CD4-positive, alpha-beta T cell (primary cell): ENCODE measurements at regions of chr1 and their contacts with region 1.

Region 1: DNA sequence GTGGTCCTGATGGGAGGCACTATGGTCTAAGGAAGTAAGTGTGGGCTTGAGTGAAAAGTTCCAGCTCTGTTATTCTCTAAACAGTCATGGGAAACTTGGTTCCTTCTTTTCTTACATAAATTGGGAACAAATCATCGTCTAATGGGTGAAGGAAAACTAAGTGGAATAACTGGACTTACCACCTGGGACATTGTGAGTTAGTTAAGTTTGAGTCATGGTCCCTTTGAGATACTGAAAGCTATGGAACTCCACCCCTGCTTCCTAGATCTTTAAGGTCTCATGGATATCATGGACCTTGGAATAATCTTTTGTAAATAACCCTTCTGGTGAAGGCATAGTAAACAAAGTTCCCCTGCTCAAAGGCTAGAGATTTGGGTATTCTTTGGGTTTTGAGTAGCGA is 16.1 kb upstream of the TXLNA start:
- DNase-seq: no peak
- ATAC-seq: no peak
- H3K4me3 ChIP-seq: no peak overlapping the region
- H3K4me3 Mint-ChIP-seq: no peak overlapping the region
- H3K27ac ChIP-seq: no peak overlapping the region
- H3K27ac Mint-ChIP-seq: no peak overlapping the region
- H3K4me1 ChIP-seq: no peaks in the 10 kb centered on the region
- H3K4me1 Mint-ChIP-seq: no peaks in the 10 kb centered on the region
- H3K27me3 ChIP-seq: no peaks in the 10 kb centered on the region
- H3K27me3 Mint-ChIP-seq: no peaks in the 10 kb centered on the region
- CTCF ChIP-seq: no peak

Region 2: DNA sequence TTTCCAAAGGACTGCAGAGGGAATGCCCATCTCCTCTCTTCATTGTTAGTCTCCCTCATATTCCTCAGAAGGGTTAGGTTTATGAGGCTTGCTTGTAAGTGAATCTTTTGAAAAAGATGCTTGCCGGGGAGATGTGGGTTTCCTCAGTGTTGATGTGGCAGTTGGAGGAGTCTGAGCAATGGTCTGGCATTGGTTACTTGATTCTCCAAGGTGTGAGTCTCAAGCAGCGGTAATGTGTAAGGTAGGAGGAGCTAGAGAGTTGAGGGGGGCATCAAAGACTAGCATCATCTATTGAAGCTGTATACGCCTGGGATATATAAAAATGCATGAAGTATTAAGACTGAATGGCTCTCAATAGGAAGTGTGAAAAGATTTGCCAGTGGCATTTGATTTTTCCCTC is 128.3 kb before region 1 on chr1:
- CTCF ChIA-PET with region 1: no interaction called
- POLR2A ChIA-PET with region 1: no interaction called
- intact Hi-C with region 1: loop called in 1 of 2 experiments (anchors 5 kb)
- DNase-seq: no peak
- ATAC-seq: no peak
- H3K4me3 ChIP-seq: no peak overlapping the region
- H3K4me3 Mint-ChIP-seq: no peak overlapping the region
- H3K27ac ChIP-seq: no peak overlapping the region
- H3K27ac Mint-ChIP-seq: peak overlapping the region; percentile 10
- H3K4me1 ChIP-seq: no peaks in the 10 kb centered on the region
- H3K4me1 Mint-ChIP-seq: peaks cover 47% of the 10 kb centered on the region
- H3K27me3 ChIP-seq: no peaks in the 10 kb centered on the region
- H3K27me3 Mint-ChIP-seq: no peaks in the 10 kb centered on the region
- CTCF ChIP-seq: no peak